ENCODE measurements at regions of chr2 and their contacts with region 1.

Region 1: GRCh38 chr2:178112202-178113152 is at the start of gene RBM45:
- DNase-seq: peak; percentile 76 to 92 (median 86)
- H3K4me3 ChIP-seq: peak within 1 kb of the TSS; percentile 61 to 98 (median 87)
- H3K27ac ChIP-seq: peak within 1 kb of the TSS in 55 of 59 donors; percentile 19 to 92 (median 80)
- H3K27me3 ChIP-seq: no peaks in the 10 kb centered on the region
- CTCF ChIP-seq: peak; percentile 94 to 100 (median 98)
- total RNA-seq, gene RBM45: 9.7 to 27.0 (median 17.0) TPM

Region 2: DNA sequence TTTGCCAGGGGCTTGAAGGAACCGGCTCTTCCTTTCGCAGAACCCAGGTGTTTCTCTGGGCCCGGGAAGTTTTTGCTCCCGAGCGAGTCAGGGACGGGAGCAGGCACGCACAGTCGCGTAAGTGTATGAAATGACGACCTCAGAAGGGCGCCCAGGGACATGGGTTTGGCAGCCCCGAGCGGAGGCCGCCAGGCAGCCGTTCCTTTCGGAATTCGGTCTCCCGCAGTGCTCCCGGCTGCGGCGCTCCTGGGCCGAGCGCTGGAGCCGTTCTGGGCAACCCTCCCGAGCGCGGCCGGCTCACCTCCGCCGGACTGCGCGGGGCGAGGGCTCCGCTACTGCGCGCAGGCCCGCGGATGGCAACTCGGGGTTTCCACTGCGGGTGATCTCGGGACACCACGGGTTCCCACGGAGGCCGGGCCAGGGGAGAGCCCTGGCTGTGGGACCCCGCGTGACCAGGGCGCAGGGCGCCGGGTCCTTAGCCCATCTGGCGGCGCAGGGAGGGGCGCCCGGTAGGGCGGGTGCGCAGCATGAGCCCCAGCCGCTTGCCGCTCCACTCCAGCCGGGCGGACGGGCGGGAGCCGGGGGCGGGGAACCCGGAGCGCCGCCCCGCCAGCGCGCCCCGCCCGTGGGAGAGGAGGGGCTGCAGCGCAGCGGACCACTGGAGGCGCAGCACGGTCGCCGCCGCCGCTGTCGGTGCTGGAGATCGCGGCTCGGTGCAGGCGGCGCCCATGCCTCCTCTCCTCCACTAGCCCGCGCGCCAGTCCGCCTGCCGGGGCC is 81.5 kb after region 1 on chr2 and contains the start of gene OSBPL6:
- intact Hi-C with region 1: loop called (anchors 5 to 10 kb)
- DNase-seq: peak; percentile 44 to 90 (median 78)
- H3K4me3 ChIP-seq: peak within 1 kb of the TSS; percentile 64 to 96 (median 88)
- H3K27ac ChIP-seq: peak within 1 kb of the TSS in 58 of 59 donors; percentile 23 to 97 (median 86)
- H3K27me3 ChIP-seq: no peaks in the 10 kb centered on the region
- CTCF ChIP-seq: peak in 29 of 56 donors; percentile 1 to 57 (median 33)
- total RNA-seq, gene OSBPL6: 15.7 to 49.5 (median 36.0) TPM

Region 3: GRCh38 chr2:178280244-178280852 is 167.9 kb after region 1 on chr2:
- intact Hi-C with region 1: loop called in 1 of 2 experiments (anchors 5 kb)
- DNase-seq: no peak
- H3K4me3 ChIP-seq: no peak overlapping the region
- H3K27ac ChIP-seq: no peak overlapping the region
- H3K27me3 ChIP-seq: no peaks in the 10 kb centered on the region
- CTCF ChIP-seq: peak; percentile 62 to 86 (median 76)

Region 4: DNA sequence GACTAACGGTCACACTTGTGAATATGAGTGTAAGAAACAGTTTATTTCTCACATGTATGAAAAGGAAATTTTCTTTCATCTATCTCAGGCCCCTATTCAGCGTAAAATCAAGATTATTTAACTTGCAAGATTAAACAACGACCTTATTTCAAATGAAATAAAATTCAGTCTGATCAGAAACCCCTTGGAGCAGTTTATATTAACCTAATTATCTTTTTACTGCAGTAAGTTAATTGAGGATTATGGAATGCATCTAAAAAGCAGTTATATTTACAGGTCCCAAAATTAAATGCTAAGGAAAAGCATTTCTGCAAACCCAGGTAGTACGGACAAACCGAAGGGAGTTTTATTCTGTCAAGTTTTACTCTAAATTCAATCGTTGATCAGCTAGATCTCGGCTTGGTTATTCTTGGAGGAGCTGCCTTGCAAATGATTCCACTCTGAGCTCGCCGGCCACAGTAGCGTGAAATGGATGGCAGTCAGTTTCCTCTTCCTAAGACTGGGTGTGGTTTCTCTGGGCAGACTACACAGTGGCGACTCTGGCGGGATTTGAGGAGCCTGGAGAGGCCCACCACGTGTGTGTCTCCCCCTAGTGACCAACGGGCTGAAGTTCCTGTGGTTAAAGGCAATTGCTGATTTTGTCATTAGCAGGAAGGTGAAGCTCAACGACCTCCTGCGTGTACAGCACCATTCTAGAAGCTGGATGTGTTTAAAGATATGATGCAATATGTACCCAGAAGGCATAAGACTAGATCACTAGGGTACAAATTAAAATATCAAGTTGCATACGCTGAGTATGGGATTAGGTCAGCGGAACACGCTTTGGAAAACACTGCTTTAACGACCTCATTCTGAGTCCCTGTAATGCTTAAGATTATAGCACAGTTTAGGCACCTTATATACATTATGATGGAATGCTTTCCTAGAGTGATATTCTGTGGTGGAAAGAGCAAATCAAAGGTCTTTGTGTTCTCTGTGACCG is 302.1 kb after region 1 on chr2:
- intact Hi-C with region 1: loop called (anchors 5 kb)
- DNase-seq: peak; percentile 61 to 89 (median 84)
- H3K4me3 ChIP-seq: peak overlapping the region; percentile 58 to 88 (median 72)
- H3K27ac ChIP-seq: peak overlapping the region in 53 of 59 donors; percentile 35 to 95 (median 87)
- H3K27me3 ChIP-seq: no peaks in the 10 kb centered on the region
- CTCF ChIP-seq: peak; percentile 75 to 94 (median 88)

Region 5: GRCh38 chr2:179410552-179411356 is 1298.3 kb after region 1 on chr2:
- intact Hi-C with region 1: no loop called
- DNase-seq: peak in 6 of 10 donors; percentile 22 to 61 (median 42)
- H3K4me3 ChIP-seq: peak overlapping the region in 25 of 59 donors; percentile 14 to 52 (median 31)
- H3K27ac ChIP-seq: no peak overlapping the region
- H3K27me3 ChIP-seq: no peaks in the 10 kb centered on the region
- CTCF ChIP-seq: peak; percentile 43 to 86 (median 78)

Region 6: GRCh38 chr2:180006781-180007579 is 1894.5 kb after region 1 on chr2 and contains the start of gene CWC22:
- intact Hi-C with region 1: loop called in 1 of 2 experiments (anchors 10 kb)
- DNase-seq: peak; percentile 86 to 97 (median 90)
- H3K4me3 ChIP-seq: peak within 1 kb of the TSS; percentile 74 to 100 (median 95)
- H3K27ac ChIP-seq: peak within 1 kb of the TSS; percentile 80 to 99 (median 95)
- H3K27me3 ChIP-seq: no peaks in the 10 kb centered on the region
- CTCF ChIP-seq: peak in 17 of 56 donors; percentile 9 to 52 (median 22)
- total RNA-seq, gene CWC22: 15.4 to 27.4 (median 20.2) TPM